ENCODE measurements at regions of chr7 and their contacts with region 1.

Region 1: GRCh38 chr7:135170274-135170997 is at the start of gene CYREN:
- DNase-seq: peak; percentile 84
- H3K4me3 Mint-ChIP-seq: peak within 1 kb of the TSS; percentile 95
- H3K27ac Mint-ChIP-seq: peak within 1 kb of the TSS; percentile 96
- H3K4me1 Mint-ChIP-seq: peaks cover 38% of the 10 kb centered on the region
- H3K27me3 Mint-ChIP-seq: no peaks in the 10 kb centered on the region
- total RNA-seq, gene CYREN: 58.8 and 58.9 TPM in 2 replicates

Region 2: DNA sequence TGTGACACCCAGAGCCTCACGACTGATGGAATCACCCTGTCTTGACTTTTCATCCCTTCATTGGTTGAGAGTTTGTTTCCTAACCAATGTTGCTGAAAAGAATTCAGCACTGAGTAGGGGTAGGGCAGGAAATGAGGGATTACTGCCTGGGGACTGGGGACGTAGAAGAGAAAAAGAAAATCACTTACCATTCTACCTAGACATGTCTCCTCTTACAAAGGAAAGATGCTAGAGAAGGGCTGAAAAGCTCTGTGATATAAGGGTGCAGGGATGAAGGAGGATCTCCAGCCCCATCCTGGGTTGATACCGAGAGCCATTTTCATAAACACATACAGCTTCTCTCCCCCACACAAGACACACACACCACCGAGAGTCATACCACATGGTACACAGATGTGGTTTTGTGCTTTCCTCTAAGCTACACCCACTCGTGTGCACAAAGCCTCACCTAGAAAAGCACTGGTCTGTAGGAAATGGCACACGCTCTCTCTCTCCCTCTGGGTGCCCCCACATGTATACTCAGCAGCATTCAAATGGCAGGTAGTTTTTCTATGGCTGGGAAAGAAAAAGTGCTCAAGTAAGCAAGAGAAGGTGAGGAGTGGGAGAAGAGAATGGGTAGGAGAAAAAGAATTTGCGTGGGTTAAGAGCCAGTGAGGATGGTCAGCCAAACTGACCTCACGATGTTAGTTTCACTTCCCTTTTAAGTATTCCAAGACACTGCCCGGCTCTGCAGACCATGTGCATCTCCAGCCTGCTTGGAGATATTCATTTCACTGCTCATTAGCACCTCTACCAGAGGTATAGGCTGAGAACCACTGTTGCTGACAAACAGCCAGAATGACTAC is 305.2 kb before region 1 on chr7:
- intact Hi-C with region 1: loop called (anchors 5 kb)
- DNase-seq: peak; percentile 44
- H3K4me3 Mint-ChIP-seq: peak overlapping the region; percentile 8
- H3K27ac Mint-ChIP-seq: peak overlapping the region; percentile 49
- H3K4me1 Mint-ChIP-seq: peaks cover 30% of the 10 kb centered on the region
- H3K27me3 Mint-ChIP-seq: no peaks in the 10 kb centered on the region

Region 3: GRCh38 chr7:135111379-135111778 is 59.1 kb before region 1 on chr7:
- intact Hi-C with region 1: no loop called
- DNase-seq: no peak
- H3K4me3 Mint-ChIP-seq: no peak overlapping the region
- H3K27ac Mint-ChIP-seq: no peak overlapping the region
- H3K4me1 Mint-ChIP-seq: no peaks in the 10 kb centered on the region
- H3K27me3 Mint-ChIP-seq: no peaks in the 10 kb centered on the region

Region 4: GRCh38 chr7:135147899-135148721 is 22.3 kb before region 1 on chr7 and contains the start of gene TMEM140:
- intact Hi-C with region 1: loop called (anchors 1 kb)
- DNase-seq: peak; percentile 61
- H3K4me3 Mint-ChIP-seq: peak within 1 kb of the TSS; percentile 88
- H3K27ac Mint-ChIP-seq: peak within 1 kb of the TSS; percentile 96
- H3K4me1 Mint-ChIP-seq: peaks cover 60% of the 10 kb centered on the region
- H3K27me3 Mint-ChIP-seq: no peaks in the 10 kb centered on the region
- total RNA-seq, gene TMEM140: 2.9 and 4.5 TPM in 2 replicates

Region 5: DNA sequence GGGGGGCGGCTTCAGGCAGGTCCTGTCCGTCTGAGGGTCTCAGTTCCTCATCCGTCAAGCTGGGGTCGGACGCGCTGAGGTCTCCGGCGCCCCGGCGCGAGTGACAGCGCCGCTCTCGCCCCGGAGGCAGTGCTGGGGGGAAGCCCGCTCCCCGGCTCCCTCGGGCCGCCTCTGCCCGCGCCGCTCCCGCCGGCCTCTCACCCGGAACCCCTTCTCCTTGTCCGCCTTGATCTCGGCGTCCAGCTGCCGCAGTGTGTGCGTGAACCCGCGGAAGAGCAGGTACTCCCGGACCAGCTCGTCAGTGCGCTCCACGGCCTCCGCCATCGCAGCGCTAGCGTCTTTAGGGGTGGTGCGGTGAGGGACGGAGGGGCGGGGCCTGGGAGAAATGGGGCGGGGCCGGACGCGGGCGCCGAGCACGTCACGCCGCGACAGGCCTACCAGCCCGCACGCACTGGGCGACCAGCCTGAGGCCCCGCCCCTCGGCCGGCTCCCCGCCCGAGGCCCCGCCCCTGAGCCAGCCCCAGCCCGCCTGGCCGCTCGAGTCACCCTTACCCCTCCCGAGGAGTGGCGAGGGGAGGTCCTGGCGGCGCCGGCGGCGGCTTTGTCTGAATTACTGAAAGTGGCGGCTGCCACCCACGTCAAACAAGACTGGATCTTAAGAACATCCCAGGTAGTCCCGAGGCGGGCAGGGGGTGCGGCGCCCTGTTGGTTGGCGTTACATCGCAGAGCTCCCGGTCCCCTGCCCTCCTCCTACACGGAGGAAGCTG is 40.9 kb after region 1 on chr7 and contains the start of gene WDR91:
- intact Hi-C with region 1: loop called (anchors 1 kb)
- DNase-seq: peak; percentile 86
- H3K4me3 Mint-ChIP-seq: peak within 1 kb of the TSS; percentile 96
- H3K27ac Mint-ChIP-seq: peak within 1 kb of the TSS; percentile 98
- H3K4me1 Mint-ChIP-seq: peaks cover 47% of the 10 kb centered on the region
- H3K27me3 Mint-ChIP-seq: no peaks in the 10 kb centered on the region
- total RNA-seq, gene WDR91: 34.6 and 35.4 TPM in 2 replicates

Measured in activated T-helper 1 cell treated with anti-CD3 and anti-CD28 coated beads, Interleukin-12 subunit alpha, Interleukin-12 subunit beta, Interleukin-2, Interleukin-4 antibody, amounts not matched to agents 30 ng/mL and 10 ng/mL and 1 ng/mL, durations not matched to agents 14 hours and 24 hours and 36 hours (primary cell).